CD4-positive, alpha-beta memory T cell (primary cell): ENCODE measurements at regions of chr7 and their contacts with region 1.

Region 1: DNA sequence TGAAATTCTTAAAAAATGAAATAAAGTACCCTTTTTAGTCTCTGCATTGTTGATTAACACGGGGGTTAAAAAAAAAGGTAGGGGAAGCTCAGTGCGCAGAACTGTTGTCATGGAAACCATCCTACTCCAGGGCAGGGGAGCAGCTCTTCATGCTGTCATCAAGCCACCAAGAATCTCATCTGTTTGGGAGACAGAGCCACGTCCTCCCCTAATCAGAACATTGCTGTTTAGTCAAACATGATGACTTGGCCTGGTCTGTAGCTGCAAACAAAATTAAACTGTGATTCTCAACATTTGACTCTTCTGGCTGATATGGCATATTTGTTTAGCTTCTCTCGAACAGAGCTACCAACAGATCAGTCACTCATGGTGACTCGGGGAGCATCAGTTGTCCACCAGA is 254.4 kb upstream of the KLF14 start:
- DNase-seq: peak; percentile 54 to 80 (median 77)
- H3K4me3 ChIP-seq: no peak overlapping the region
- H3K4me3 Mint-ChIP-seq: peak overlapping the region; percentile 6 to 74 (median 68)
- H3K27ac ChIP-seq: peak overlapping the region; percentile 73
- H3K27ac Mint-ChIP-seq: peak overlapping the region in 6 of 7 donors; percentile 95 to 99 (median 96)
- H3K4me1 ChIP-seq: peaks cover 97% of the 10 kb centered on the region
- H3K4me1 Mint-ChIP-seq: peaks cover 32 to 87% (median 71%) of the 10 kb centered on the region in 4 donors
- H3K27me3 ChIP-seq: no peaks in the 10 kb centered on the region
- H3K27me3 Mint-ChIP-seq: no peaks in the 10 kb centered on the region

Region 2: GRCh38 chr7:130951303-130951975 is 37.0 kb before region 1 on chr7:
- CTCF ChIA-PET with region 1: interaction called, 3 read pairs
- POLR2A ChIA-PET with region 1: interaction called, 8 read pairs
- intact Hi-C with region 1: loop called (anchors 5 kb)
- DNase-seq: peak; percentile 54 to 85 (median 61)
- H3K4me3 ChIP-seq: peak overlapping the region in 1 of 2 donors; percentile 8
- H3K4me3 Mint-ChIP-seq: no peak overlapping the region
- H3K27ac ChIP-seq: peak overlapping the region; percentile 76
- H3K27ac Mint-ChIP-seq: no peak overlapping the region
- H3K4me1 ChIP-seq: peaks cover 96% of the 10 kb centered on the region
- H3K4me1 Mint-ChIP-seq: peaks cover 20 to 59% (median 56%) of the 10 kb centered on the region in 4 donors
- H3K27me3 ChIP-seq: no peaks in the 10 kb centered on the region
- H3K27me3 Mint-ChIP-seq: no peaks in the 10 kb centered on the region

Region 3: GRCh38 chr7:131007394-131008330 is 19.2 kb after region 1 on chr7:
- CTCF ChIA-PET with region 1: interaction called, 43 read pairs
- POLR2A ChIA-PET with region 1: interaction called, 4 read pairs
- intact Hi-C with region 1: loop called (anchors 2 kb)
- DNase-seq: peak; percentile 65 to 75 (median 68)
- H3K4me3 ChIP-seq: peak overlapping the region in 1 of 2 donors; percentile 13
- H3K4me3 Mint-ChIP-seq: peak overlapping the region in 7 of 8 donors; percentile 13 to 86 (median 69)
- H3K27ac ChIP-seq: peak overlapping the region; percentile 57
- H3K27ac Mint-ChIP-seq: peak overlapping the region; percentile 84 to 99 (median 94)
- H3K4me1 ChIP-seq: peaks cover 86% of the 10 kb centered on the region
- H3K4me1 Mint-ChIP-seq: peaks cover 66 to 94% (median 82%) of the 10 kb centered on the region in 4 donors
- H3K27me3 ChIP-seq: no peaks in the 10 kb centered on the region
- H3K27me3 Mint-ChIP-seq: no peaks in the 10 kb centered on the region